Heart left ventricle (tissue), 16 donors: ENCODE measurements at regions of chr9 and their contacts with region 1.

Region 1: GRCh38 chr9:18255158-18255629 is 218.8 kb upstream of the ADAMTSL1 start:
- DNase-seq: peak; percentile 76 to 84 (median 80)
- ATAC-seq: peak; percentile 71 to 88 (median 85)
- H3K4me3 ChIP-seq: no peak overlapping the region
- H3K27ac ChIP-seq: no peak overlapping the region
- H3K4me1 ChIP-seq: peaks cover 0 to 11% (median 1%) of the 10 kb centered on the region in 12 donors
- H3K27me3 ChIP-seq: no peaks in the 10 kb centered on the region
- CTCF ChIP-seq: peak; percentile 94 to 99 (median 97)
- POLR2A ChIP-seq: no peak

Region 2: DNA sequence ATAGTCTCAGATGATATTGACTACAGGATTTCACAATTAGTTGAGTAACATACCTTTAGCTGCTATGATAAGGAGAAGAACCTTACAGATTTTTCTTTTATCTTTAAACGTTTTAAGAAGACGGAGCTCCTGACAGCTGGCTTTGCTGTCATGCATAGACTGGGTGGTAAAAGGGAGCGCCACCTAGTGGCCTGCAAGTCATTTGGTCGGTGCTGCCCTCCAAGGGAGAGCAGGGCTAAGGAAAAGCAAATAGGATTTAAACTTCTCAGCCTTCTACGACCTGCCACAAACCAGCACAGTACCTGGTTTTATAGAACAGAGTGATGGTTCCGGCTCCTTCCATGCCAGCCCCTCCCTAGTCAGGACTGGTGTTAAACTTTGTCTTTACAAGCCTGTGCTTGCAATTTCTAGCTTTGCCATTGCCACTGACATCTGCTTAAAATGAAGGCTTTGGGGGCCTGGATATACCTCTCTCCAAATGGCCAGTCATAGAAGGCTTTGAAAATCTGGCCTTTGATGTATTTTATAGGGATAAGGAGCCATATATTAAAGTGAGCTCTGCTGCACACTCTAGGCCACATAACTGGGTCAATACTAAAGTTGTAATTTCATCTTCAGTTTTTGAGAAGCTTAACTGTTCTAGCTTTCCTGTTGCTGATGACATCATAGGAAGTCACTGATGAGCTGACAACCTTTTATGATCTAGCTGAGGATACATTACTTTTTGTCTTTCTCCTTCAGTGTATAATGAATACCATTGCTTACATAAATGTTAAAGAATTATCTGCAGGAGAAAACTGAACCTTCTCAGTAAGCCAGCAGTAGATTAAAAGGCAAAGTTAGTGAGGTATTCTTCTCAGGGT is 187.7 kb after region 1 on chr9:
- intact Hi-C with region 1: loop called (anchors 1 to 5 kb)
- DNase-seq: peak; percentile 68 to 81 (median 72)
- ATAC-seq: peak; percentile 74 to 89 (median 81)
- H3K4me3 ChIP-seq: no peak overlapping the region
- H3K27ac ChIP-seq: peak overlapping the region in 1 of 12 donors; percentile 31
- H3K4me1 ChIP-seq: peaks cover 0 to 21% (median 11%) of the 10 kb centered on the region in 12 donors
- H3K27me3 ChIP-seq: no peaks in the 10 kb centered on the region
- CTCF ChIP-seq: peak; percentile 86 to 97 (median 92)
- POLR2A ChIP-seq: no peak

Region 3: GRCh38 chr9:18834740-18835361 is 579.7 kb after region 1 on chr9:
- intact Hi-C with region 1: loop called in 1 of 10 experiments (anchors 10 kb)
- DNase-seq: no peak
- ATAC-seq: no peak
- H3K4me3 ChIP-seq: no peak overlapping the region
- H3K27ac ChIP-seq: no peak overlapping the region
- H3K4me1 ChIP-seq: no peaks in the 10 kb centered on the region
- H3K27me3 ChIP-seq: no peaks in the 10 kb centered on the region
- CTCF ChIP-seq: no peak
- POLR2A ChIP-seq: no peak

Region 4: GRCh38 chr9:18861609-18862544 is 606.7 kb after region 1 on chr9:
- intact Hi-C with region 1: loop called in 3 of 10 experiments (anchors 5 to 10 kb)
- DNase-seq: peak in 4 of 5 donors; percentile 41 to 58 (median 49)
- ATAC-seq: peak; percentile 72 to 92 (median 87)
- H3K4me3 ChIP-seq: peak overlapping the region in 2 of 12 donors; percentile 0
- H3K27ac ChIP-seq: peak overlapping the region in 6 of 12 donors; percentile 7 to 62 (median 30)
- H3K4me1 ChIP-seq: peaks cover 0 to 26% (median 14%) of the 10 kb centered on the region in 12 donors
- H3K27me3 ChIP-seq: no peaks in the 10 kb centered on the region
- CTCF ChIP-seq: peak in 6 of 12 donors; percentile 8 to 50 (median 20)
- POLR2A ChIP-seq: no peak

Region 5: GRCh38 chr9:19018201-19018600 is 763.0 kb after region 1 on chr9:
- intact Hi-C with region 1: loop called in 6 of 10 experiments (anchors 5 kb)
- DNase-seq: no peak
- ATAC-seq: no peak
- H3K4me3 ChIP-seq: no peak overlapping the region
- H3K27ac ChIP-seq: no peak overlapping the region
- H3K4me1 ChIP-seq: peaks cover 0 to 2% (median 0%) of the 10 kb centered on the region in 12 donors
- H3K27me3 ChIP-seq: no peaks in the 10 kb centered on the region
- CTCF ChIP-seq: no peak
- POLR2A ChIP-seq: no peak